ENCODE measurements at regions of chr15 and their contacts with region 1.

Region 1: DNA sequence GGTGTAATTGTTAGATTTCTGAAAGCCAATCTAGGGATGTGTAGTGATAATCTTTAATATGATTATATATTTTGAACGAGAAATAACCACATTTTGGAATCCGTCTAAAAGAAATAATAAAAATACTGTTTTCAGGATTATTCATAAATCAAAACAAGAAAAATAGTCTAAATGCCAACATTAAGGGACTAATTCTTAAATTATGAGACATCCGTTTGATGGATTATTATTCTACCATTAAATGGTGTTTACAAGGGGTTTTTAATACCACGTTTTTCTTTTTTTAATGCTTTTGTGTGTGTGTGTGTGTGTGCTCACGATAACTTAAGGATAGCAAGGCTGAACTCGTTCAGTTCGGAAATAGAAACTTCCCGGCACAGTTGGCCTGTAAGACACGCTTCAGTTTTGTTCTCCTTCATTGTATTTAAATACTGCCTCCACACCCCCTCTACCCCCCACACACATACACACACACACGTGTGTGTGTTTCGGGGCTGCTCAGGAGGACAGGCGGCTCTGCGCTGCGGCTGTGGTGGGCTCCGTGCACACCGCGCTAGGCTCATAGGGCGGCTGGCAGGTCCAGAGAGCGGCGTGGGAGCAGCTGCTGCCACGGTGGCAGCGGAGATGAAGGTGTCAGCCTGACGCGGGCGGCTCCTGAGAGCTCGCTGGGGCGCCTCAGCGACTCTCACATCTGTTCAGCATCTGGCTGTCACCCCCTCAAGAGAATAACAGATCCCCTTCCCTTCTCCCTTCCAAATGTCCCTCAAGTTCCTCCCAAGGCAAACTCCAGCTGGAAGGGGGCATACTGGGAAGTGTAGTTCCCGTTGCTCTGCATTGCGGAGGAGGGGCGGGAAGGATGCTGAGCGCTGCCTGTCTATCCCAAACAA is 23.0 kb upstream of the ANP32A start:
- DNase-seq: peak; percentile 85
- H3K4me3 ChIP-seq: peak overlapping the region; percentile 64
- H3K27ac ChIP-seq: peak overlapping the region; percentile 99
- H3K4me1 ChIP-seq: peaks cover 75% of the 10 kb centered on the region
- CTCF ChIP-seq: no peak

Region 2: DNA sequence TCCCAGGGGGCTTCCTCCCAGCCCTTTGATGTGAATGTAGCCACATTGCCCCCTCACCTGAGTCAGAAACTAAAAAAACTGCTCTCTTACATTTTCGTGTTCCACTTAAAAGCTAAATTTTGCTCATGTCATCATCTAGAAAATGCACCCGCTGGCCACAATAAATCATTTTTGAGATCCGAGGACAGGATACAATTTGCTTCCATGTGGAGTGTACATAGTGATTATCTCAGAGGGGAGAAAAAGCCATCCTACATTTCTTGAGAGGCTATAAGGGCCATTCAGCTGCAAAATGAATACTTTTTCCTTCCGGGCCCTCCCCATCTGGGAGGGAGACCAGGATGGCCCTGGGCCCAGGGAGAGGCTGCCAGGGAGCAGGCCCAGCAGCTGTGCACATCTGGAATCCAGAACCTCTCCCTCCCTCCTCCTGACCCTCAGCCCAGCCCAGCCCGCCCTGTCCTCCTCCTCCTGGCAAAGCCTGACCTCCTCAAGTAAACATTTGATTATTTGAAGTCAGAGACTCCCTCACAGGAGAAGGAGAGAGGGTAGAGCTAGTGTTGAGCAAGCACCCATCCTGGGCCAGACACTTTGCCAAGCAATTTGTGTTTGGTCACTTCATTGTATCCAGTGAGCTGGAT is 205.8 kb before region 1 on chr15:
- CTCF ChIA-PET with region 1: no interaction called
- POLR2A ChIA-PET with region 1: interaction called, 3 read pairs
- intact Hi-C with region 1: loop called (anchors 2 kb)
- DNase-seq: no peak
- H3K4me3 ChIP-seq: no peak overlapping the region
- H3K27ac ChIP-seq: peak overlapping the region; percentile 97
- H3K4me1 ChIP-seq: peaks cover 97% of the 10 kb centered on the region
- CTCF ChIP-seq: no peak

Region 3: DNA sequence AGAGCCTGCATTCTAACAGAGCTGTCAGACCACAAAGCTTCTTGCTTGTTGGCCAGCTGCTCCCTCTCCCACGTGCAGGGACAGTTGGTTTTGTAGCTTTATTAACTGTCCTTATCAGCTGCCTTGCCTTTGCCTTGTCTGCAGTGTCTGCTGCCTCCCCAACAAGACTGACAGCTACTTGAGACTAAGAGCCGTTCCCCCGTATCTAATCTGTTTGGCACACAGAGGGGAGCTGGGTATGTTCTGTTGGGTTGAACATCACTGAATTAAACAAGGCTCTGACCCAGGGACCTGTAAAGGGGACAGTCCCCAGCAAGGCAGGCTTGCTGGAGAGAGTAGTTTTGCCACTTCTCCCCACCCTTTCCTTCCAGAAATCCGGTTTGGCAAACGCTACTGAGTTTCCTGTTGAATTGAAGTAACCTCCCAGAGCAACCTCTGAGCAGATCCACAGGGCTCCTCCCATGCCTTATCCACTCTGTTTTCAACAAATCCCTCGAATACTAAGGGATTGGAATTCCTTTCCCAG is 139.1 kb before region 1 on chr15:
- CTCF ChIA-PET with region 1: no interaction called
- POLR2A ChIA-PET with region 1: no interaction called
- intact Hi-C with region 1: no loop called
- DNase-seq: no peak
- H3K4me3 ChIP-seq: no peak overlapping the region
- H3K27ac ChIP-seq: no peak overlapping the region
- H3K4me1 ChIP-seq: no peaks in the 10 kb centered on the region
- CTCF ChIP-seq: no peak

Region 4: DNA sequence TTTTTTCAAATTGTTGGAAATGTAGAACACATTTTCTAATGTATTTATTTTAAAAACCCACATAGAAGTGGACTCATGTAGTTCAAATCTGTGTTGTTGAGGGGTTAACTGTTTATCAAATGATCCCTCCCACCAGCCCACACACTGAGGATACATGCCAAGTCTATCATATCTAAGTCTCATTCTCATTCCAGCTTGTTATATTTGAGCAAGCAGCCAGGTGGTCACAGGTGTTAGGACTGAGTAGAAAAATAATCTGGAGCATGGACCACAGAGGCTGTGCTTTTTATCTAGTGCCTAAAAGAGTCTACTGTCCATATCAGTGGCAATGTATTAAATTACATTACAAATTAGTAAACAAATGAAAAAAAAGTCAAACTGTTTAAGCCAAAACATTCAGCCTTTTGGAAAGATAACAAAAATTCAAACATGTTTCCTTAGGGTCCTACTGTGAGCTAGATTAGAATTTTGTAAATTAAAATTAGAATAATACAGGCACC is 66.0 kb after region 1 on chr15:
- CTCF ChIA-PET with region 1: no interaction called
- POLR2A ChIA-PET with region 1: no interaction called
- intact Hi-C with region 1: no loop called
- DNase-seq: no peak
- H3K4me3 ChIP-seq: no peak overlapping the region
- H3K27ac ChIP-seq: no peak overlapping the region
- H3K4me1 ChIP-seq: no peaks in the 10 kb centered on the region
- CTCF ChIP-seq: no peak

Region 5: GRCh38 chr15:69237718-69238117 is 394.1 kb after region 1 on chr15:
- CTCF ChIA-PET with region 1: no interaction called
- POLR2A ChIA-PET with region 1: no interaction called
- intact Hi-C with region 1: no loop called
- DNase-seq: no peak
- H3K4me3 ChIP-seq: no peak overlapping the region
- H3K27ac ChIP-seq: no peak overlapping the region
- H3K4me1 ChIP-seq: no peaks in the 10 kb centered on the region
- CTCF ChIP-seq: no peak

Measured in OCI-LY7 (cell line).